ENCODE measurements at regions of chr6 and their contacts with region 1.

Region 1: GRCh38 chr6:43506667-43507471 is 3.3 kb downstream of the LRRC73 start:
- DNase-seq: peak; percentile 90
- H3K4me3 ChIP-seq: no peak overlapping the region
- H3K27ac ChIP-seq: peak overlapping the region in 4 of 8 donors; percentile 4 to 36 (median 15)
- H3K4me1 ChIP-seq: peaks cover 21 to 66% (median 37%) of the 10 kb centered on the region in 6 donors
- H3K27me3 ChIP-seq: peaks cover 3 to 31% (median 10%) of the 10 kb centered on the region in 7 donors
- CTCF ChIP-seq: peak; percentile 87 to 99 (median 96)
- POLR2A ChIP-seq: peak in 1 of 3 donors; percentile 5

Region 2: GRCh38 chr6:43263314-43264178 is 243.3 kb before region 1 on chr6:
- intact Hi-C with region 1: loop called (anchors 5 kb)
- DNase-seq: peak; percentile 95
- H3K4me3 ChIP-seq: no peak overlapping the region
- H3K27ac ChIP-seq: no peak overlapping the region
- H3K4me1 ChIP-seq: peaks cover 0 to 16% (median 0%) of the 10 kb centered on the region in 6 donors
- H3K27me3 ChIP-seq: peaks cover 0 to 8% (median 0%) of the 10 kb centered on the region in 7 donors
- CTCF ChIP-seq: peak; percentile 64 to 90 (median 80)
- POLR2A ChIP-seq: no peak

Region 3: DNA sequence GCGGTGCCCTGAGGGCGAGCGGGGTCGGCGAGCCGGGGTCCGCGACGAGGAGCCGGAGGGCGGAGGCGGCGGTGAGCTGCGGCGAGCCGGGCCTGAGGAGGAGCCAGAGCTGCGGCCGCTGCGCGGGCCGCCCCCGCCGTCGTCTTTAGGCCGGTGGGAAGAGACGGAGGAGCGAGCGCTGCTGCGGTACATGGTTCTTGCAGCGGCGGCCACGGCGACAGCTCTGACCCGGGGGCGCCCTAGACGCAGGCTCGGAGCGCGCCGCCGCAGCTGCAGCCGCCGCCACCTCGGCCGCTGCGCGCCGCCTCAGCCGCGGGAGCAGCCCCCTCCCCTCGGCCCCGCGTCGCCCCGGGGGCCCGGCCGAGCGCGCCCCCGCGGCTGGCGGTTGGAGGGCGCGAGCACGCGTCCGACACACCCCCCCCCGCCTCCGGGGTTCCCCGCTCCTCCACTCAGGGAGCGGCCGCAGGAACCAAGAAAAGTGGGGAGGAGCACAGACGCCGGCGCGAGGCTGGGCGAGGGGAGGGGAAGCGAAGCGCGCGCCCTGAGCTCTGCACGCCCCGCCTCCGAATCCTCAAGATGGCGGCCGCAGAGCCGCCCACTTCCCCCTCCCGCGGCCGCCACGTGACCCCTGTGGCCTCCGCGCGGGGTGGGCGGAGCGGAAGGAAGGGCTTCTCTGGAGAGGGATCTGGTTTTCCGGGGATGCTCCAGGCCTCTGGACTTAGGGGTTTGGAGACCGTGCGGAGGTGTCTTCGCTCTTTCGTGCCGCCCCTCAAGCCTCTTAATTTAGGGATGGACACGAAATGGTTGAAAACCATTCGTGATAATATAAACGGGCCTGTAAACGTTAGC is 137.5 kb before region 1 on chr6 and contains the start of gene ZNF318:
- intact Hi-C with region 1: no loop called
- DNase-seq: peak; percentile 99
- H3K4me3 ChIP-seq: peak within 1 kb of the TSS; percentile 64 to 92 (median 76)
- H3K27ac ChIP-seq: peak within 1 kb of the TSS; percentile 78 to 96 (median 92)
- H3K4me1 ChIP-seq: peaks cover 14 to 78% (median 40%) of the 10 kb centered on the region in 6 donors
- H3K27me3 ChIP-seq: no peaks in the 10 kb centered on the region
- CTCF ChIP-seq: peak in 2 of 11 experiments; percentile 24 to 36
- POLR2A ChIP-seq: peak in 2 of 3 donors; percentile 31 to 39
- total RNA-seq, gene ZNF318: 28.9 to 56.9 (median 39.5) TPM

Region 4: DNA sequence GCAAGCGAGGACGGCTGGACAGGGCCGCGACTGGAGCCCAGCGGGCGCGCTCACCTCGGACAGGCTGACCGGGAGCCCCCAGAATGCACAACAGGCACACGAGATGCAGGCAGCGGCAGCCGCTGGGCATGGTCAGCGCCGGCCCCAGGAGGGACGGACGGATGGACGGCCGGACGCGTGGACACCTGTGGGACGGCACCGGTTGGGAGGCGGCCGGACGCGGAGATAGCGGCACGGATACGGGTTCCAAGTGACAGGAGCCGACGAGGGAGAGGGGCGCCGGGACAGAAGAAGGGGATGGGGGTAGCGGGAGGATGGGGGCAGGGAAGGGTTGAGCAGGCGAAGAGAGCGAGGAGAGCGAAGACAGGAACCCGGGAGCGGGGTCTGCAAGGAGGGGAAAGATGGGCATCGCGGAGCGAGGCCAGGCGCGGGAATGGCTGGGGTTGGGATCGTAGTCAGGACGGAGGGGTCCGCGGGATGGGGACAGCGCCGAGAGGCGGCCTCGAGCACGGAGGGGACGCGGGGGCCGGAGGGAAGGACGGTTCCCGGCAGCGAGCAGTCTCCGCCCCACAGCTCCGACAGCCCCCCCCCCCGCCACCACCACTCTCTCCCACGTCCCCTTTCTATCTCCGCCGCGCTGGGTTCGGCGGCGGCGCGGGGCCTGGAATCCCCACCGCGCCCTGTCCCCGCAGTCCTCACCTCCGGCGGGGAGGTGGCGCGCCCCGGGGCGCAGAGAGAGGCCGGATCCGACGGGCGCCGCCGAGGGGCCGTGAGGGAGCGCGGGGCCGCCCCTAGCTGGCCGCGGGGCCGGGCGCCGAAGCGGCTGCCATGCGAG is 52.0 kb before region 1 on chr6:
- intact Hi-C with region 1: loop called (anchors 5 kb)
- DNase-seq: peak; percentile 95
- H3K4me3 ChIP-seq: peak overlapping the region; percentile 48 to 84 (median 58)
- H3K27ac ChIP-seq: peak overlapping the region in 3 of 8 donors; percentile 13 to 50 (median 19)
- H3K4me1 ChIP-seq: peaks cover 0 to 27% (median 20%) of the 10 kb centered on the region in 6 donors
- H3K27me3 ChIP-seq: peaks cover 0 to 53% (median 26%) of the 10 kb centered on the region in 7 donors
- CTCF ChIP-seq: peak in 5 of 11 experiments; percentile 4 to 46 (median 17)
- POLR2A ChIP-seq: no peak